ENCODE measurements at regions of chr7 and their contacts with region 1.

Region 1: DNA sequence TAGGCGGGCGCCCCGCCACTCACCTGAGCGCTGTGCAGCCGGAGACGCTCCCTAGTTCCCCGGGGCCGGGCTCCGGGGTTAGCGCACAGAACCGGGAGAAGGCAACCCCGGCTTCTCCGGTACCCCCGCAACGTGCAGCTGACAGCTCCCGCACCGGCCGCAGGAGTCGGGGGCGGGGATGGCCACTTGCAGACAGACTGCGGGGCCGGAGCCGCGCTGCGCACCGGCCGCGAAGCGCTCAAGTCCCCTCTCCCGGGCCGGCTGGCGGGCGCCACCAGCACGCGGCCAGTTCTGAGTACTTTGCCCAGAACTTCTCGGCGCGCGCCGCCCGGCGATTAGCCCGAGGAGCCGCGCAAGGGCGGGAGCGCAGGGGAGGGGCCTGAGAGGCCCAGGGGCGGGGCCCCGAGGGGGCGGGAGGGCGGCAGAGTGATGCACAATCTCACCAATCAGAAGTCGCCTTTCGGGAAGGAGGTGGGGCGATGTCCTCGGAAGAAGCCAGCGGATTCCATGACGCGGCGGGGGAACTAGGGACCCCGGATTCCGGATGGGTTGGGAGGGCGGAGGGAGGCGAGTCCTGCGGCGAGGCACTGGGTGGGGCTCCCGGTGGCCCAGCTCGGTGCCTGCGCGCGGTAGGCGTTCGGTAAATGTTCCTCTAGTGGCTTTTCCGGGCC is at the start of gene OSBPL3:
- DNase-seq: peak; percentile 96
- ATAC-seq: peak; percentile 83
- H3K4me3 Mint-ChIP-seq: peak within 1 kb of the TSS; percentile 98
- H3K27ac Mint-ChIP-seq: peak within 1 kb of the TSS; percentile 91
- H3K4me1 Mint-ChIP-seq: peaks cover 49% of the 10 kb centered on the region
- H3K27me3 Mint-ChIP-seq: peaks cover 6% of the 10 kb centered on the region
- total RNA-seq, gene OSBPL3: 98.3 to 133 TPM

Region 2: GRCh38 chr7:24819916-24820689 is 159.9 kb before region 1 on chr7:
- CTCF ChIA-PET with region 1: interaction called, 90 read pairs
- DNase-seq: peak; percentile 89
- ATAC-seq: peak; percentile 54
- H3K4me3 Mint-ChIP-seq: peak overlapping the region; percentile 50
- H3K27ac Mint-ChIP-seq: peak overlapping the region; percentile 98
- H3K4me1 Mint-ChIP-seq: peaks cover 45% of the 10 kb centered on the region
- H3K27me3 Mint-ChIP-seq: no peaks in the 10 kb centered on the region

Region 3: DNA sequence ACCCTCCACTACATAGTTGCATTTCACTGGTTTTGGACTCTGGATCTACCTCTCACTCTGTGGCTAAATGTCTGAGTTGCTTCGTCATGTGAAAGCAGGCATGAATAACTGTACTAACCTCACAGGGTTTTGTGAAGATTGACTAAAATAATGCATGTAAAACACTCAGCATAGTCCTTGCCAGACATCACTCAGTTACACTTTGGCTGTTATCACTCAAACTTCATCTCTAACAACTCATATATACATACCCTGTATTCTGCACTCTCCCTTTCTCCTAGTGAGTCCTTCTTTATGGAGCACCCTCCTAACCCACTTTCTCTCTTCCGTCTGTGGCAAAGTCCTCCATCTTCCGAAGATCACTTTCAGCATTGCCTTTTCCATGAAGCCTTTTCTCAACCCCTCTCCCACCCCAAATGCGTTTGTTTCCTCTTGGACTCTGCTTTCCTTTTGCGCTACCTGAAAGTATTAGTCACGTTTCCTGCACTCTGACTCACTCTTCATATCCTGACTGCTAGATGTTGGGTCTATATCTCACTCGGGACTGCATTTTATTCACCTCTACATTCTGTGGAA is 72.6 kb before region 1 on chr7:
- CTCF ChIA-PET with region 1: interaction called, 69 read pairs
- DNase-seq: peak; percentile 69
- ATAC-seq: peak; percentile 73
- H3K4me3 Mint-ChIP-seq: no peak overlapping the region
- H3K27ac Mint-ChIP-seq: no peak overlapping the region
- H3K4me1 Mint-ChIP-seq: peaks cover 42% of the 10 kb centered on the region
- H3K27me3 Mint-ChIP-seq: no peaks in the 10 kb centered on the region

Region 4: GRCh38 chr7:24965831-24966709 is 13.9 kb before region 1 on chr7:
- CTCF ChIA-PET with region 1: interaction called, 21 read pairs
- DNase-seq: peak; percentile 78
- ATAC-seq: peak; percentile 83
- H3K4me3 Mint-ChIP-seq: peak overlapping the region; percentile 51
- H3K27ac Mint-ChIP-seq: peak overlapping the region; percentile 76
- H3K4me1 Mint-ChIP-seq: peaks cover 75% of the 10 kb centered on the region
- H3K27me3 Mint-ChIP-seq: no peaks in the 10 kb centered on the region